Right ventricle myocardium inferior (tissue), 1 donor: ENCODE measurements at regions of chr2 and their contacts with region 1.

Region 1: GRCh38 chr2:180077295-180077906 is 70.3 kb upstream of the CWC22 start:
- DNase-seq: no peak
- ATAC-seq: no peak

Region 2: DNA sequence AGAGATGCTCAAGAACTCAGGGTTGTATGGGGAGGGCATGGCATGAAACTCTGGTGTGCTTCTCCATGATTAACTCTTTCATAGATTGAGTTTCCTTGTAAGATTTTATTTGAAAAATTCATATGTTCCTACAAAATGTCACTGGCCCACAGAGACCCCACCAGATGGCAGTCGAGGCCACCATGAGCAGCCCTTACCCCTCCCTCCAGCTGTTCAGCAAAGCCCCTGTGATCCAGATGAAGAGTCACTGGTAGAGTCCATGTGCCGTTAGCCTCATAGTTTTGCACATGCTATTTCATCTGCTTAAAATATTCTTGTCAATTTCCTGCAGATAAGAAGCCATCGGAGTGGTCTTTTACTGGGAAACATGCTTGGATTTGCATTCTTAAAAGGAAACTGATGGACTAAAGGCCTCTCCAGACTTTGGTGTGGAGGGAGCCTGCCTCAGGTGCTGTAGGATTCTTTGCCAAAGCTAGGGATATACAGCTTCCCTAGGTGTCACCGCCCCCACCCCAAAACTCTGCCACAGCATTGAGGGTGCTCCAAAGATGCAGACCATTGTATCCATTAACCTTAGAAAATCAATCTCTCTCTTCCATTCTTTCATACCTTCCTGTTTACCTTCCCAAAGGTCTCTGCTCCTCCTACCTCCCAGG is 234.8 kb before region 1 on chr2:
- intact Hi-C with region 1: loop called (anchors 5 kb)
- DNase-seq: no peak
- ATAC-seq: no peak

Region 3: DNA sequence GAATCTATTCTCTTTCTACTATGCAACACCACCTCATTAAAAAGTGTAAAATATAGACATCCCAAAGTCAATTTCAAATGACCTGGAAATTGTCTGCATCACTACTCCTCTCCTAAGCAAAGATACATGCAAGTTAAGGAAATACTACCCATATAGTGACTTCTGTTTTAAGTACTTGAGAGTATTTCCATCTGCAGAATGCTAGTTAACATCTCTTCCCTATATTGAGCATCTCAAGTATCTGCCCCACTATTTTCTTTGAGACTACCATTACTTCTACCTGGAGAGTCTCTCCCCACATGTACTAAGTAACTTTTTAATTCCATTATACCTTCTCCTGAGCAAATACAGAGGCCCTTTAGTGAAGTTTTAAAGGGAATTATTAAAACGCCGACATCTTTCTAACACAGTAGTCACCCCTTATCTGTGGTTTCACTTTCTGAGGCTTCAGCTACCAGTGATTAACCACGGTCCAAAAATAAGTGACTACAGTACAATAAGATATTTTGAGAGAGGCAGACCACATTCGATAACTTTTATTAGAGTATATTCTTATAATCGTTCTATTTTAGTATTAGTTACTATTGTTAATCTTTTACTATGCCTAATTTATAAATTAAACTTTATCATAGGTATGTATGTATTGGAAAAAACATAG is 92.1 kb before region 1 on chr2:
- intact Hi-C with region 1: no loop called
- DNase-seq: no peak
- ATAC-seq: no peak